ENCODE measurements at regions of chr10 and their contacts with region 1.

Region 1: GRCh38 chr10:4849555-4850242 is 23.7 kb downstream of the AKR1E2 start:
- DNase-seq: peak; percentile 62
- ATAC-seq: peak; percentile 86
- H3K4me3 Mint-ChIP-seq: peak overlapping the region; percentile 42
- H3K27ac Mint-ChIP-seq: peak overlapping the region; percentile 38
- H3K4me1 Mint-ChIP-seq: peaks cover 17% of the 10 kb centered on the region
- H3K27me3 Mint-ChIP-seq: no peaks in the 10 kb centered on the region
- CTCF ChIP-seq: peak; percentile 46

Region 2: GRCh38 chr10:4813023-4813422 is 36.7 kb before region 1 on chr10:
- CTCF ChIA-PET with region 1: interaction called, 8 read pairs
- POLR2A ChIA-PET with region 1: interaction called, 3 read pairs
- intact Hi-C with region 1: loop called (anchors 2 kb)
- DNase-seq: no peak
- ATAC-seq: no peak
- H3K4me3 Mint-ChIP-seq: no peak overlapping the region
- H3K27ac Mint-ChIP-seq: no peak overlapping the region
- H3K4me1 Mint-ChIP-seq: peaks cover 3% of the 10 kb centered on the region
- H3K27me3 Mint-ChIP-seq: peaks cover 2% of the 10 kb centered on the region
- CTCF ChIP-seq: no peak

Region 3: GRCh38 chr10:4838743-4839142 is 11.0 kb before region 1 on chr10:
- CTCF ChIA-PET with region 1: interaction called, 22 read pairs
- POLR2A ChIA-PET with region 1: no interaction called
- intact Hi-C with region 1: no loop called
- DNase-seq: no peak
- ATAC-seq: no peak
- H3K4me3 Mint-ChIP-seq: no peak overlapping the region
- H3K27ac Mint-ChIP-seq: no peak overlapping the region
- H3K4me1 Mint-ChIP-seq: no peaks in the 10 kb centered on the region
- H3K27me3 Mint-ChIP-seq: no peaks in the 10 kb centered on the region
- CTCF ChIP-seq: no peak

Region 4: GRCh38 chr10:5094265-5095205 is 244.8 kb after region 1 on chr10 and contains the start of gene AKR1C3:
- CTCF ChIA-PET with region 1: interaction called, 3 read pairs
- POLR2A ChIA-PET with region 1: no interaction called
- intact Hi-C with region 1: loop called (anchors 10 kb)
- DNase-seq: no peak
- ATAC-seq: no peak
- H3K4me3 Mint-ChIP-seq: peak within 1 kb of the TSS; percentile 44
- H3K27ac Mint-ChIP-seq: no peak within 1 kb of the TSS
- H3K4me1 Mint-ChIP-seq: peaks cover 3% of the 10 kb centered on the region
- H3K27me3 Mint-ChIP-seq: peaks cover 3% of the 10 kb centered on the region
- CTCF ChIP-seq: no peak
- total RNA-seq, gene AKR1C3: not detected in 2 replicates

Region 5: GRCh38 chr10:5283305-5284158 is 433.8 kb after region 1 on chr10:
- CTCF ChIA-PET with region 1: interaction called, 3 read pairs
- POLR2A ChIA-PET with region 1: no interaction called
- intact Hi-C with region 1: loop called (anchors 1 kb)
- DNase-seq: no peak
- ATAC-seq: no peak
- H3K4me3 Mint-ChIP-seq: no peak overlapping the region
- H3K27ac Mint-ChIP-seq: no peak overlapping the region
- H3K4me1 Mint-ChIP-seq: no peaks in the 10 kb centered on the region
- H3K27me3 Mint-ChIP-seq: peaks cover 10% of the 10 kb centered on the region
- CTCF ChIP-seq: no peak

Region 6: GRCh38 chr10:5434017-5434753 is 584.5 kb after region 1 on chr10:
- CTCF ChIA-PET with region 1: interaction called, 18 read pairs
- POLR2A ChIA-PET with region 1: no interaction called
- intact Hi-C with region 1: loop called (anchors 1 kb)
- DNase-seq: no peak
- ATAC-seq: no peak
- H3K4me3 Mint-ChIP-seq: no peak overlapping the region
- H3K27ac Mint-ChIP-seq: no peak overlapping the region
- H3K4me1 Mint-ChIP-seq: no peaks in the 10 kb centered on the region
- H3K27me3 Mint-ChIP-seq: no peaks in the 10 kb centered on the region
- CTCF ChIP-seq: no peak

Region 7: DNA sequence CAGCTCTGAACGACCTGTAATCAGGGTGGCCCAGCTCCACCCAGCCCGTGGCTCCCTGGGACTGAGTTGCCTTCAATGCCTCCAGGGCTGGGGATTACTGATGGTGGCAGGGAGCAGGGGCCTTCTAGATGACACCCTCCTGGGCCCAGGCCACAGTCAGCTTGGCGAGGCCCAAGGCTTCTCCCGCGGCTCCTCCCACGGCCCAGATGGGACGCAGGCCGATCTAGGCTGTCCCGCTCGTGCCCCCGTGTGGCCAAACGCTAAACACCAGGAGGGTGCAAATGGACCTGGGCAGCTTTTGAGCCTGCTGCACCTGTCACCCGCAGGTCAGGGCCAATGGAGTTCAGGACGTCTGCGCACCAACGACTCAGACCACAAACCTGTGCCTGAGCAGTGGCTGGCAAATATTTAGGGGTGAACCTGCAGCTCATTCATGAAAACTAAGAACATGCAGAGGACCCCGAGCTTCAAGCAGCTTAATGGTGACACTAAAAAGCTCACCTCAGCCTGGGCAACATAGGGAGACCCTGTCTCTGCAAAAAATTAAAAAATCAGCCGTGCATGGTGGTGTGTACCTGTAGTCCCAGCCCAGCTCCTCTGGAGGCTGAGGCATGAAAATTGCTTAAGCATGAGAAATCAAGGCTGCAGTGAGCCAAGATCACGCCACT is 773.5 kb after region 1 on chr10:
- CTCF ChIA-PET with region 1: interaction called, 21 read pairs
- POLR2A ChIA-PET with region 1: no interaction called
- intact Hi-C with region 1: loop called (anchors 1 kb)
- DNase-seq: peak; percentile 75
- ATAC-seq: peak; percentile 99
- H3K4me3 Mint-ChIP-seq: no peak overlapping the region
- H3K27ac Mint-ChIP-seq: no peak overlapping the region
- H3K4me1 Mint-ChIP-seq: peaks cover 4% of the 10 kb centered on the region
- H3K27me3 Mint-ChIP-seq: no peaks in the 10 kb centered on the region
- CTCF ChIP-seq: no peak

Measured in activated B cell treated with CpG ODN at 0.5 μM for 24 hours (primary cell).